Psoas muscle (tissue), 8 donors: ENCODE measurements at regions of chr11 and their contacts with region 1.

Region 1: DNA sequence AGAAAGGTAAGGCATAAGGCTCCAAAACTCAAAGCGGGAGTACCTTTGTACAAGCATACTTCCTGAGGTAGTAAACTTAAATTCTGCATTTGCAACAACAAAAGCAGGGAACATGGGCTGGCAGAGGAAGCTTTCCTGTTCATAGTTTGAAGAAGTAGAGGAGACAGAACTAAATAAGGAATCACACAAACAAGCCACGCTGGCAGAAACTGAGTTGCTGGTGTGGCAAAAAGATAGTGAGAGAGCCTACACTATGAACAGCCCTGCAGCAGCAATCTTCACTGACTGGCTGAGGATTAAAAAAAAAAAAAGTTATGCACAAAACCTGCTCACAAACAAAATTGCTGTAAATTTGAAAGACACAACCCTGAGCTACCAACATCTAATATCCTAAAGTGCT is 46.5 kb downstream of the FCHSD2 start:
- DNase-seq: no peak
- ATAC-seq: no peak
- H3K4me3 ChIP-seq: no peak overlapping the region
- H3K27ac ChIP-seq: no peak overlapping the region
- H3K4me1 ChIP-seq: no peaks in the 10 kb centered on the region
- H3K27me3 ChIP-seq: no peaks in the 10 kb centered on the region
- CTCF ChIP-seq: no peak

Region 2: DNA sequence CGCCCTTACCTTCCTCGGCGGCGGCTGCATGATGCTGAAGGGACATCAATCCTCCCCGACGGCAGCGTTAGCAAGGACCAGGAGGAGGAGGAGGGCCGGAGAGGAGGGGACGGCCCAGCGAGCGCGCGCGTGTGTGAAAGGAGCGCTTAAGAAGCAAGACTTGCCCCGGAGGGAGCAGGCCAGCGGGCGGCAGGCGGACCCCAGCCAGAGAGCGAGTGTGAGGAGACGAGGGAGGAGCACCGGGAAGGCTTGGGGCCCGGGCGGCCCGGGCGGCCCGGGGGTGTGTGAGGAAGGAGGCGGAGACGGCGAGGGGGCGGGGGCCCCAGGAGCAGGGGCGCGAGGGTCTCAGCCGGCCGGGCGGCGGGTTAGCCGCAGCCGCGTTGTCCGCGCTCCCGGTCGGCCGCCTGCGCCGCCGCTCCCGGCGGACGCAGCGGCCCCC is 46.3 kb after region 1 on chr11:
- intact Hi-C with region 1: loop called in 1 of 2 experiments (anchors 5 kb)
- DNase-seq: peak; percentile 80 to 87
- ATAC-seq: peak; percentile 22 to 39 (median 32)
- H3K4me3 ChIP-seq: peak overlapping the region; percentile 78
- H3K27ac ChIP-seq: peak overlapping the region; percentile 95
- H3K4me1 ChIP-seq: peaks cover 18% of the 10 kb centered on the region
- H3K27me3 ChIP-seq: no peaks in the 10 kb centered on the region
- CTCF ChIP-seq: no peak